Dorsolateral prefrontal cortex (tissue), 120 donors: ENCODE measurements at regions of chr3 and their contacts with region 1.

Region 1: GRCh38 chr3:173395412-173396181 is 1.9 kb upstream of the NLGN1 start:
- DNase-seq: peak; percentile 75 to 95 (median 91)
- H3K4me3 ChIP-seq: peak overlapping the region; percentile 51 to 90 (median 76)
- H3K27ac ChIP-seq: peak overlapping the region; percentile 78 to 98 (median 91)
- H3K27me3 ChIP-seq: no peaks in the 10 kb centered on the region
- CTCF ChIP-seq: peak in 30 of 56 donors; percentile 8 to 51 (median 28)

Region 2: DNA sequence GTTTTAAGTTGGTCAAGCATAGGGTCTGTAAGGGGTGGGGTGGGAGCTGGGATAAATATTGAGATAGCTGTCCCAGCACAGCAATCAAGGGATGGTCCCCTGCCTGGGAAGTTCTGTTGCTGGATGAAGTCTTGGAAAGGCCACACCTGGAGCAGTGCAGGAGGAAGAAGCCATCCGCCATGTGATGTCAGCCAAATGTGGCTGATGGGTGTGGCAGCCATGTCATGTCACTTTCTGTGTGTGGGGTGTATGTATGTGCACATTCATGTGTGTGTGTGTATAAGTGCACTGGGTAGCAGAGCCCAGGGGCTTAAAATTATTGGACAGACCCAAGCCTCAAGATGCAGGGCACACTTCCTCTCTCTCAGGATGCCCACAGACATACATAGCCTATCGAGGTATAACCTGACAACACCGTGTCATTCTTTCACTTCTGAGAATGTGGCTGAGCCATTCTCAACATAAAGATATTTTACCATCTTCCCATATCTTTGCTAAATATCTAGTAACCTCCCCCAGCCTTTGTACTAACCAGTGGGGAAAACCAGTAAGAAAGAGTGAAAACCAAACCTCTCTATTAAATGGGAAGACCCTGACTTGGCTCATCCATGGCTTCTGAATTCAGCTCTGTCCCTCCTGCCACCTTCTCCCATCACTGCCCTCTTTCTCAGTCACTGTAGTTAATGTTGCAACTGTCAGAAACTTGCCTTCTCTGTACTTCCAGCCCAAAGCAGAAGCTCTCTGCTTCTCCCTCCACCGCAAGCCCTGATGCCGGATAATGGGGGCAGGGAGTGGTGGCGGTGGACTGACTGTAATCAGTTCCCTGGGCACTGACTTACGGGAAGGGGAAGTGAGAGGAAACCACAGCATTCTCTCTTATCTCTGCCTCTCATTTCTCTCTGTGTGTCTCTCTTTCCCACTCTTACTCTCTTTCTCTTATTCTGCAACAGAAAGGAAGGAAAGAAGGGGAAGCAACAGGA is 883.5 kb before region 1 on chr3:
- intact Hi-C with region 1: no loop called
- DNase-seq: peak in 4 of 10 donors; percentile 22 to 48 (median 38)
- H3K4me3 ChIP-seq: no peak overlapping the region
- H3K27ac ChIP-seq: peak overlapping the region in 9 of 59 donors; percentile 5 to 44 (median 21)
- H3K27me3 ChIP-seq: peaks cover 0 to 7% (median 0%) of the 10 kb centered on the region in 45 donors
- CTCF ChIP-seq: no peak

Region 3: DNA sequence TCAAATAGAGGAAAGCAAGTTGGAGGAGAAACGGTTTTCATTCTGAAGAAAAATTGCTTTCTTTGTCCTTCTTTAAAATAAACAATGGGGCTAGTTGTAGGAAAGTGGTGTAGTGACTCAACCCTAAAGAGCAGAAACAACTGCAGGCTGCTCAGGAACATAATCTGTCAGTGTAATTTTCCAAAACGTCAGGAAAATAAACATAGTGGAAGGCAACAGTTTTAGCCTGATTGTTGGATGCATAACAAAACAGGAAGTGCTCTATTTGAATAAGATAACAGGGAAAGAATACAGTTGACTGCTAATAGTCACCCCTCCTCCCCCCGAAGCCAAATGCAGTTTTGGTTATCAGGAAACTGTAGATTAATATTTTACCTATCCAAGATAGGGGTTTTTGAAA is 477.4 kb before region 1 on chr3:
- intact Hi-C with region 1: no loop called
- DNase-seq: no peak
- H3K4me3 ChIP-seq: peak overlapping the region in 3 of 59 donors; percentile 5 to 18 (median 6)
- H3K27ac ChIP-seq: peak overlapping the region in 9 of 59 donors; percentile 7 to 56 (median 39)
- H3K27me3 ChIP-seq: peaks cover 0 to 5% (median 0%) of the 10 kb centered on the region in 45 donors
- CTCF ChIP-seq: no peak

Region 4: GRCh38 chr3:172982736-172983364 is 412.7 kb before region 1 on chr3:
- intact Hi-C with region 1: loop called in 1 of 2 experiments (anchors 10 kb)
- DNase-seq: no peak
- H3K4me3 ChIP-seq: peak overlapping the region in 4 of 59 donors; percentile 3 to 21 (median 9)
- H3K27ac ChIP-seq: no peak overlapping the region
- H3K27me3 ChIP-seq: no peaks in the 10 kb centered on the region
- CTCF ChIP-seq: peak in 55 of 56 donors; percentile 15 to 68 (median 51)

Region 5: DNA sequence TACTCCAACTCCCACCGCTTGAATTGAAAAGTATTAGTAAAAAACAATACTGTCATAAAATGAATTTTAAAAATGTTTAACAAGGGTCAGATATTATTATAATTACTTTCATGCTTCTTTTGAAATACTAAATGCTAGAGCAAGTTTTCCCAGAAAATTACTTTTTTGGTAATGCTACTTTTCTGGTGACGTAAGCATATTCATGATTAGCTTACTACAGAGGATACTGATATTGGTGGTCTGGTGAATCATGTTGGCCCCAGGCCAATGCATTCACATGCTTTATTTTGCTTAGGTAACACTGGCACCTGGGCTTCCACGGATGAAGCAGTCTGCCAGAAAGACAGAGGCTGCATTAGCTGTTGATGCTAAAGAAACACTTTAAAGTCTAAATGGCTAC is 267.0 kb before region 1 on chr3:
- intact Hi-C with region 1: no loop called
- DNase-seq: no peak
- H3K4me3 ChIP-seq: no peak overlapping the region
- H3K27ac ChIP-seq: no peak overlapping the region
- H3K27me3 ChIP-seq: peaks cover 0 to 2% (median 0%) of the 10 kb centered on the region in 45 donors
- CTCF ChIP-seq: no peak

Region 6: GRCh38 chr3:174440741-174441587 is 1045.4 kb after region 1 on chr3:
- intact Hi-C with region 1: loop called in 1 of 2 experiments (anchors 5 kb)
- DNase-seq: peak; percentile 57 to 89 (median 78)
- H3K4me3 ChIP-seq: peak overlapping the region; percentile 32 to 95 (median 79)
- H3K27ac ChIP-seq: peak overlapping the region; percentile 47 to 98 (median 91)
- H3K27me3 ChIP-seq: no peaks in the 10 kb centered on the region
- CTCF ChIP-seq: peak in 37 of 56 donors; percentile 4 to 61 (median 29)